Left cardiac atrium (tissue), 4 donors: ENCODE measurements at regions of chr2 and their contacts with region 1.

Region 1: DNA sequence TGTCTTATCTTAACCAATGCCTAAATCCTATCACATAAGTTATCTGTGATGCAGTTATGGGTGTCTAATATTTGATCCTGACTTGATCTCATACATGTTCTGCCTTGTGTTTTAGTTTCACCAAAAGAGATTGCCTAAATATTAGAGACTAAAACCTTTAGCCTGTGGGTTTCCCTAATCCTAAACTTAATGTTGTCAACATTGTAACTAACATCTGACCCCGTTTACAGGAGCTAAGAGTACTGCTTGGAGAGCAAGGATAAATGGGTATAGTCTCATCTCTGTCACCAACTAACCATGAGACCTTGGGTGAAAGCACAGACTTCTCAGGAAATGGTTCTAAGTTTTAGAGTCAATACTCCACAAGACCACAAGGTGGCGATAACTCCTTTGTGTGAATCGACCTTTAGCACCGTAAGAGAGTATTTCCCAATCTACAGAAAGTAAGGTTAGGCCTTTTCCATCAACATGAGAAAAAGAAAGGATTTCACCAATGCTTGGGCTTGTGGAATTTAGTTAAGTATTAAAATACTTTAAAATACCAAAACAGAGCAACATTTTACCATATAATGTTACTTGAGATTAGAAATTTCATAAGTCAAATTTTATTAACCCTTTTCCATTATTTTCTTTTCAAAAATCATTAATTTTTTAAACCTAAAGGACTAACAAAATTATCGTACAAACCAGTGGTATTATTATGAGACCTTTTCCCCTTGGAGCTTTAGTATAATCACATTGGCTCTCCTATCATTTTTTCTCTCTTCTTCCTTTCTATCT is 60.5 kb downstream of the G6PC2 start:
- DNase-seq: no peak
- ATAC-seq: peak; percentile 83 to 91

Region 2: DNA sequence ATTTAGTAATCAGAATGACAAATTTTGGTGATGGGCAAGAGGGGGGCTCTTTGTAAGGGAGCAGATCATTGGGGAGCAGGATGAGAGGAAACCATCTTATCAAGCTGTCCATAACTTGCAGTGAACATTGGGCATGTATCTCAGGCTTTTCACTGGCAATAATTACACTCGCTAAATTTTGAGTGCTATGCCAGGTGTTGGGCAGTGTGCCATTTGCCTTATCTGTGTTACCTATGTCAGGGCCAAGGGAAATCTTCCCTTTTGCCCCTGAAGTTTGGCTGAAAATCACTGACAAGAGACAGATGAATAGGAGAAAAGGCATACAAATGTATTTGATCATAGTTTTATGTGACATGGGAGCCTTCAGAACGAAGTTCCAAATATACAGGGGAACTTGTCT is 120.2 kb before region 1 on chr2:
- intact Hi-C with region 1: no loop called
- DNase-seq: no peak
- ATAC-seq: no peak

Region 3: DNA sequence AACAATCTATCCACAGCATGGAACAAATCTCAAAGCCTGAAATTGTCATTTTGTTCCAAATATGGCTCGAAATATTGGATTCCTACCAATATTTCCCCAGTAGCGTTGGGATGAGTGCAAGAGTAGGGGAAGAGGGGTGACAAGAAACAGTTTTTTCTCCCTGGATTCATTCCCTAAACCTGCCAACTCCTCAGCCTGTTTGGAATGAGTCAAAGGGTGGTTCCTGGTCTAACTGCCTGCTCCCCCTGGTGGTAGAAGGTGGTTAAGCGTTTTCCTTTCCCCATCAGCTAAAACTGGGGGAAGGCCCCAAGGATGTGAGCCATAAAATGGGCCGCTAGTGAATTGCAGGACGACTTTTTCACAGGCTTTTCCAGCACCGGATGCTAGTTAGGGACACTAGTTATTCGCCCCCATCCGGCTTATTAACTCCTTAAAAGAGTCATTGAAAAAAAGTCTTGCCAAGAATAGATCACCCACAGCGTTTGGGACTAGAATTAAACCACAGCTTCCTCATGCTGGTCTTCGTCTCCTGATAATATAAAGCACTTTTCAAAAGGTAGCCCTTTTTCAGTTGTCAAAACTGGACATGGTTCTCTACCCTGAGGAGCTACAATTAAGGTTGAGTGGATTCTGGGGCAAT is 180.2 kb after region 1 on chr2:
- intact Hi-C with region 1: loop called in 1 of 2 experiments (anchors 5 kb)
- DNase-seq: peak; percentile 47
- ATAC-seq: peak; percentile 49 to 71